ENCODE measurements at regions of chr22 and their contacts with region 1.

Region 1: DNA sequence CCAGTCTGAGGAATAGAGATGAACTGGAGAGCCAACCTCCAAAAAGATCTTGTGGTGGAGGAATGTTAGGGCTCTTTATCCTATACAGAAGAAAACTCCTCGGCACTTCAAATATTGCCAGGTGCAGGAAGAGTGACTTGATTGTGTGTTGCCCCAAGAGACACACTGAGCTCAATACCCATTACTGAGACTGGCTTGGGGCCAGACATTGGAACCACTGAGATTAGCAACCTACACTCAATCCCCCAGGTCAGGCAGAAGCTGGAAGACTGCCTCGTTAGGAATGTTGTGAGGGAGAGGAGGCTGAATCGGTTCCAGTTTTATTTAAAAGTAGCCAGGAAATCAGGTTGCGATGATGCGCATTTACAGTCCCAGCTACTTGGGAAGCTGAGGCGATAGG is 2.4 kb upstream of the SGSM3 start:
- DNase-seq: no peak
- ATAC-seq: no peak
- H3K4me3 Mint-ChIP-seq: no peak overlapping the region
- H3K27ac Mint-ChIP-seq: no peak overlapping the region
- H3K4me1 Mint-ChIP-seq: peaks cover 21% of the 10 kb centered on the region
- H3K27me3 Mint-ChIP-seq: no peaks in the 10 kb centered on the region
- CTCF ChIP-seq: no peak

Region 2: GRCh38 chr22:40334899-40335298 is 33.1 kb before region 1 on chr22:
- CTCF ChIA-PET with region 1: no interaction called
- POLR2A ChIA-PET with region 1: interaction called, 11 read pairs
- intact Hi-C with region 1: no loop called
- DNase-seq: no peak
- ATAC-seq: no peak
- H3K4me3 Mint-ChIP-seq: no peak overlapping the region
- H3K27ac Mint-ChIP-seq: peak overlapping the region; percentile 84
- H3K4me1 Mint-ChIP-seq: peaks cover 44% of the 10 kb centered on the region
- H3K27me3 Mint-ChIP-seq: no peaks in the 10 kb centered on the region
- CTCF ChIP-seq: no peak

Region 3: GRCh38 chr22:40385036-40385782 is 17.2 kb after region 1 on chr22:
- CTCF ChIA-PET with region 1: no interaction called
- POLR2A ChIA-PET with region 1: interaction called, 11 read pairs
- intact Hi-C with region 1: loop called (anchors 2 kb)
- DNase-seq: no peak
- ATAC-seq: peak; percentile 96
- H3K4me3 Mint-ChIP-seq: peak overlapping the region; percentile 82
- H3K27ac Mint-ChIP-seq: peak overlapping the region; percentile 95
- H3K4me1 Mint-ChIP-seq: peaks cover 68% of the 10 kb centered on the region
- H3K27me3 Mint-ChIP-seq: no peaks in the 10 kb centered on the region
- CTCF ChIP-seq: no peak

Region 4: DNA sequence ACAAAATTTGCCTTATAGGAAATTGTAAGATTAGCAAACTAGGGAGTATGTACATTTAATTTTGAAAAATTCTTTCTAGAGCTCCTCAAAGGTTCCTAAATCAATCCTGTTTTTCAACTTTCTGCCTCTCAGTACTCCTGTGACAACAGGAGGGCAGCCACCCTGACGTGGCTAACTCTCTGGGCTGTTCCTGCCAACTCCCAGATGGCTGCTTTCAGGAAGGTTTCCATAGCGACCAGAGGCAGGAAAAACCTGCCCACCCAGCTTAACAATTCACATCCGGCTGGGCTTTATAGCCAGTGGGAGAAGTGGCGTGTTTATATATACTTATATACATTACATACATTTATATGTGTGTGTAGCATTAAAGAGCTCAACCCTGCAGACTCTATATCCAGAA is 28.9 kb after region 1 on chr22:
- CTCF ChIA-PET with region 1: interaction called, 4 read pairs
- POLR2A ChIA-PET with region 1: interaction called, 8 read pairs
- intact Hi-C with region 1: loop called (anchors 1 kb)
- DNase-seq: no peak
- ATAC-seq: no peak
- H3K4me3 Mint-ChIP-seq: peak overlapping the region; percentile 28
- H3K27ac Mint-ChIP-seq: peak overlapping the region; percentile 80
- H3K4me1 Mint-ChIP-seq: peaks cover 86% of the 10 kb centered on the region
- H3K27me3 Mint-ChIP-seq: no peaks in the 10 kb centered on the region
- CTCF ChIP-seq: no peak

Region 5: GRCh38 chr22:40415531-40416266 is 47.7 kb after region 1 on chr22:
- CTCF ChIA-PET with region 1: interaction called, 3 read pairs
- POLR2A ChIA-PET with region 1: interaction called, 4 read pairs
- intact Hi-C with region 1: loop called (anchors 2 kb)
- DNase-seq: no peak
- ATAC-seq: peak; percentile 48
- H3K4me3 Mint-ChIP-seq: peak overlapping the region; percentile 75
- H3K27ac Mint-ChIP-seq: peak overlapping the region; percentile 91
- H3K4me1 Mint-ChIP-seq: peaks cover 80% of the 10 kb centered on the region
- H3K27me3 Mint-ChIP-seq: no peaks in the 10 kb centered on the region
- CTCF ChIP-seq: no peak